Right ventricle myocardium superior (tissue), 1 donor: ENCODE measurements at regions of chr20 and their contacts with region 1.

Region 1: GRCh38 chr20:32433311-32434021 is 75.3 kb downstream of the ASXL1 start:
- DNase-seq: no peak
- ATAC-seq: peak; percentile 17

Region 2: DNA sequence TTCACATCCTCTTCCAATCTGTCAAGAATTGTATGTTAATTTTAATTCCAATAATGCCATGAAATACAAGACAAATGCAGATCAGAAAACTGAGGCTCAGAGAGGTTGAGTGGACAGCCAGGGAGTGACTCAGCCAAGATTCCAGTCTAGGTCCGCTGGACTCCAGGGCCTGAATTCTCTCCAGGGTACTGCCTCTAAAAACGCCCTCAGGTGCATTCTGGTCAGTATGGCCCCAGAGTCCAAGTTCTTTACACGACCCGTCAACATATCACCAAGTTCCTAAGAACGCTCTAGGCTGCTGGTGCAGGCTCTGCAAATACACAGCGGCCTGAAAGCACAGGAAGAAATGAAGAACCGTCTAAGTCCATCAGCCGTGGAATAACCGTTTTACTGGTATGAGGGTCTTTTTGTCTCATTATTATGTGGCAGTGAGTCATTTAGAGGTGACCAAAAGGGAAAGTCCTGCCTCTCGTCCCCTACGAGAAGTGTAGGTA is 76.0 kb before region 1 on chr20:
- intact Hi-C with region 1: no loop called
- DNase-seq: no peak
- ATAC-seq: peak; percentile 8

Region 3: DNA sequence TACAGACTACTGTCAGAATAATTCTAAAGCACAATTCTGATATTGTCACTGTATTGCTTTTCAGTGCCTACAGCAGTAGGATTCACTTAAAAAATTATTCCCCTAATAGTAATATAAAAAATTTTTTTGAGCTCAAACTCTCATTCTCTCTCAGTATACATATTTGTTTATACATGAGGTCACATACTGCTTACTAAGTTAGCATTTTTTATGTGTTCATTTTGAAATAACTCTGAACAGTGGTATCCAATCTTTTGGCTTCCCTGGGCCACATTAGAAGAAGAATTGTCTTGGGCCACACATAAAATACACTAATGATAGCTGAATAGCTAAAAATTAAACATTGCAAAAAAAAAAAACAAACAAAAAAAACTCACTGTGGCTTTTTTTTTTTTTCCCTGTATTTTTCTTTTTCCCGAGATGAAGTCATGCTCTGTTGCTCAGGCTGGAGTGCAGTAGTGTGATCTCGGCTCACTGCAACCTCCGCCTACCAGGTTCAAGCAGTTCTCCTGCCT is 36.8 kb before region 1 on chr20:
- intact Hi-C with region 1: loop called (anchors 5 kb)
- DNase-seq: no peak
- ATAC-seq: no peak

Region 4: DNA sequence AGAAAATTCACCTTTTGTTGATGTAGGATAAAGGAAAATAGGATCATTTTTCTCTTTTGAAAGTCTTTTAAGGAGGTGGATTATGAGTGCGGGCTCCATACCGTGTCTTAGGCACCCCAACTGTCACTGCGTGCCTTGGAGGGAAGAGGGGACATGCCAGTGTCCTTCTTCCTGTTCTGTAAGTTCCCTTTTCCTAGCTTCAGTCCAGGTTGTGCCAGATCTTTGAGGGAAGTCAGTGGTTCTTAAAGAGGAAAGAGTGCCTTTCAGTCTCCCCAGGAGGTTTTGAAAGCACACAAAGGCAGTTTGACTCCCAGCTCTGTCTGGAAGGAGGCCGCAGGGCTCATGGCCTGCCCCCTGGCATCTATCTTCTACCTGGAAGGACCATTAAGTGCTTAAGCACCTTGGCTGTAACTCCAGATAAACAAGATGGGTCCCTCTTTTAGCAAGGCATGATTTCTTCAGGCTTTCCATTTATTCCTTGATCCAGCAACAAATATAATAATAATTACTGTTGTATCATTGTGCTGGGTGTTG is 438.2 kb after region 1 on chr20:
- intact Hi-C with region 1: no loop called
- DNase-seq: no peak
- ATAC-seq: peak; percentile 57